ENCODE measurements at regions of chr1 and their contacts with region 1.

Region 1: DNA sequence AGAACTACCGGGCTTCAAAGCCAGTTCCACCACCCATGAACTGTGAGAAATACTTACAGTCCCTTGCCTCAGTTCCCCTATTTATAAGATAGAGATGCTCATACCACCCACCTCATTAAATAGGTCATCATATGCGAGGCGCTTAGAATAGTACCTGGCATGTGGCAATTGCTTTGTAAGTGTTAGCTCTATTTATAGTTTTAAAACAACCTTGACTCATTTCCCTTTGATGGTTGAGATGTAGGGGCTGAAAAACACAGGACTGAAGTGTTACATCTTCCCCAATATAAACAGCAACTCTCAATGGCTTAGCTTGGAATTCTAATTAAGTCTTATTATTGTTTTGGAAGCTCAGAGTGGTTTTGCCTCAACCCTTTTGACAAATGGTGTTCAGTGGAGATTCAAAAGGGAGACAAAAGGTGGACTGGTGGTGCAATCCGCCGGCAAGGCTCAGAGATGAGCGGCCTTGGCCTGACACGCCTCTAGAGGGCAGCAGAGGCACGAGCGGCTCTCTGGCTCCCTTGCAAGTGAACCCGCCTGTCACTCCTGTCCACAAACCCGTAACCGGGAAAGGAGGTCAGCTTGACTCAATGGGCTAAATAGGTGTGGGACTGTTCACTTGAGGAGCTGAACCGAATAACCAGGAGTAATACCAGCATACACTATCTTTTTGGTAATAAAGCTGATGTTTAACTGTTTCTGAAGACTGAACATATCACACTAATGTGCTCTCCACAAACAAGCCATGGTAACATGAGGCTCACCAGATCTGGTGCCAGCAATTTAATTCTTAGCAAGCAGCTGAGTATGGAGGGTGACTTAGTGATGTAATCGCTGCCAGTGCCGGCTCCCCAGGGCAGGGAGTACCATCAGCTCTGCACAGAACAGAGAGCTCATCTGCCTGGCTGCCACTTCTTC is 19.5 kb upstream of the SMYD2 start:
- ATAC-seq: peak; percentile 97 to 100 (median 99)
- H3K4me3 ChIP-seq: no peak overlapping the region
- H3K27ac ChIP-seq: no peak overlapping the region
- H3K4me1 ChIP-seq: peaks cover 23% of the 10 kb centered on the region in 2 donors

Region 2: DNA sequence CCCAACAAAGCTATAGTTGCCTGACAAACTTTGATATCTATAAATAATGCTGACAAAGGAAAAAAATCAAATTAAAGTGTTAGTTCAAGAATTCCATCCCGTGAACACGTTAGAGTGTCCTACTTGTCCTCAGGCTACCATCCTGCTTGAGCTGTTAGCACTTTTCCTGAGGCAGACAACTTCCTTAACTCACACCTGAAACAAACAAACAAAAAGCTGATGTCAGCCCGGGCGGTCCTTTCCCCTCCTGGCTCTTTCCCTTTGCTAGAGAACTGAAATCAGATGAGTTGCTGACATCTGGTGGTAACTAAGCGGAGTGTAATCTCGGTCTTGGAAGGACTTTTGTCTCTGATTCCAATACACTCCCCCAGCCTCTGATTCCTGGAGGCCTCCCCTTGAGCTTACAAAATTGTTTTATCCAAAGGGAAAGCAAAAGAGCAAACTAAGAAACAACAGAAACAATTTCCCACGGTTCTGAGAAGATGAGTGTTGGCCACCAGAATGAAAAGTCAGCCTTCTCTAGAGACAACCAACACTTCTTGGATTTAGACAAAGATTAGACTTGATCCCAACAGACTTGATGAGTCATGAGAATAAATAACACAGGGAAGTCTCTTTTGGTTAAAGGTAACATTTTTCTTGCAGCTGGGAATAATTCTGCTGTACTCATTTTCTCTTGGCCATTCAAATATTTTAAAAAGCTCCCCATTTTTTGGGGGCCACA is 138.2 kb before region 1 on chr1:
- in situ Hi-C with region 1: no loop called
- ATAC-seq: peak; percentile 84 to 96 (median 90)
- H3K4me3 ChIP-seq: no peak overlapping the region
- H3K27ac ChIP-seq: no peak overlapping the region
- H3K4me1 ChIP-seq: peaks cover 7 to 10% of the 10 kb centered on the region in 2 donors

Region 3: DNA sequence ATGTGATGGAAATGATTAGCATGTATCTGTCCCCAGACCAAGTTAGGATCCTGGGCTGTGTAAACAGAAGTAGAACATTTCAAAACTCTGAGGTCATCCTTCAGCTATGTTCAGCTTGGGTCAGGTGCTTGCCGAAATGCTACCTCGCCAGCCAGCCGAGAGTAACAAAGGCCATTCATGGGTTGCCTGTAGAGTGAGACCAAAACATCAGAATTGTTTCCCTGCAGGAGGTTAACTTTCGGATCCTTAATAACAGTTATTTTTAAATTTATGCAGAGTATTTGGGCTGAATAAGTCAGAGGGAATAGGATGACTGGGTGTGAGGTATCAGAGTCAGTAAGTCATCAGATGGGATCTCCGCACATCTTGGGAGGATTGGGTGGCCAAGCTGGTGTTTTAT is 55.1 kb after region 1 on chr1:
- in situ Hi-C with region 1: loop called in 1 of 9 experiments (anchors 10 kb)
- ATAC-seq: peak in 2 of 8 experiments; percentile 85 to 94
- H3K4me3 ChIP-seq: no peak overlapping the region
- H3K27ac ChIP-seq: no peak overlapping the region
- H3K4me1 ChIP-seq: peaks cover 15 to 37% of the 10 kb centered on the region in 2 donors

Region 4: GRCh38 chr1:214584805-214585766 is 323.6 kb after region 1 on chr1:
- in situ Hi-C with region 1: loop called in 1 of 9 experiments (anchors 25 kb)
- ATAC-seq: peak in 4 of 8 experiments; percentile 60 to 91 (median 86)
- H3K4me3 ChIP-seq: no peak overlapping the region
- H3K27ac ChIP-seq: no peak overlapping the region
- H3K4me1 ChIP-seq: no peaks in the 10 kb centered on the region